ENCODE measurements at regions of chr11 and their contacts with region 1.

Region 1: DNA sequence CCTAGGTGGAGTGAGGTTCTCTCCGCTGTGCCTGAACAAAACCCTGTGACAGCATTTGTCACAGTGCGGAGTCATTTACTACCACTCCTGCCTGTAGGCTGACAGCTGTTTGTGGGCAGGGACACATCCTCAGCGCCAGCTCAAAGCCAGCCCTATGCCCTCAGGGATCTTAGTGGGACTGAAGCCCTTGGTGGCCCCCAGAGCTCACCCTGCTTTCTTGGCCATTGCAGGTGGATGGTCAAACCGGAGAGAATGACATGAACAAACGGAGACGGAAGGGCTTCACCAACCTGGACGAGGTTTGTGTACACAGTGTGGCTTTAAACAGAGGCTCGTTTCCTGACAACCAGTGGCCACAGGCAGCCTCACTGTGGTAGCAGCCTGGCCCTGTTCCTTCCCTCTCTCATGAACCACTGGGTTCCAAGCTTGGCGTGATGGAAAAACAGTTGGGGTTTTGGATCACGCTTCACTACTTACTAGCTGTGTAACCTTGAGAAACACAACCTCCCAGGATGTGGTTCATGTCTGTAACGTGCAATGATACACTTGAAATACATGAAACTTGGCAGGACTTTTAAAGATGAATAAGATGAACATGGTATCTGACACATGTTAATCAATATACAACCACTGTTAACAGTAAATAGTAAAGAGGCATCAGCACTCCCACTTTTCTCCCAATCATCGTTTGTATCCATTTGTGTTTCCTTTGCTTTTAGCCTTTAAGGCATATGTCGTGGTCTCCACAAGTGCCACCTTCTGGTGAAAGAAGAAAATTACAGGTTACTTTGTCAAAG is 125.8 kb downstream of the MICAL2 start:
- DNase-seq: peak; percentile 58
- ATAC-seq: peak; percentile 78
- H3K4me3 ChIP-seq: no peak overlapping the region
- H3K27ac ChIP-seq: no peak overlapping the region
- H3K4me1 ChIP-seq: peaks cover 26% of the 10 kb centered on the region
- H3K27me3 ChIP-seq: no peaks in the 10 kb centered on the region
- CTCF ChIP-seq: peak; percentile 69
- EP300 ChIP-seq: no peak
- POLR2A ChIP-seq: no peak
- RAD21 ChIP-seq: peak; percentile 58

Region 2: DNA sequence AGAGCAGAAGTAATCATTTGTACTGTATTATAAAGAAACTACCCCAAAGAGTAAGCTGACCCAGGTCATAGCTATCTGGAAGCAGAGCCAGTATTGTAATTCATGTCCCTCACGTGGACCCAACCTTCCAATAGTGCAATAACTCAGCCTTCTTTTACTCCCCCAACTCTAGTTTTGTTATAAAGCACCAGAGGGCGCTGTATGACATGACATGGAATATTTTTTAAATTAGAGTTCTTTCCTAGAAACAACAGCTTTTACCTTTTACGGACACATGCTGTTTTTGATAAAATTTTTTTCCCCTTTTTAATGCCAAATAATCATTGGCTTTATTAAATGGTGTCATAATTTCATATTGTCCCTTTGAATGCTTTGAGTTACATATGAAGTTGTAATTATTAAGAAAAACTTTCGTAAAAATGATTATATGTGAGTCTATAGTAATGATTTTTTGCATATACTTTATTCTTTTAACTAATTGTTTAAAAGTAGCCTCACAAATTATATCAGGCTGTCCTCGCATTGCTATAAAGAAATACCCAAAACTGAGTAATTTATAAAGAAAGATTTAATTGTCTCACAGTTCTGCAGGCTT is 304.6 kb before region 1 on chr11:
- CTCF ChIA-PET with region 1: no interaction called
- POLR2A ChIA-PET with region 1: no interaction called
- in situ Hi-C with region 1: no loop called
- intact Hi-C with region 1: loop called (anchors 10 kb)
- DNase-seq: peak; percentile 62
- ATAC-seq: peak; percentile 88
- H3K4me3 ChIP-seq: no peak overlapping the region
- H3K27ac ChIP-seq: no peak overlapping the region
- H3K4me1 ChIP-seq: no peaks in the 10 kb centered on the region
- H3K27me3 ChIP-seq: no peaks in the 10 kb centered on the region
- CTCF ChIP-seq: peak; percentile 62
- EP300 ChIP-seq: no peak
- POLR2A ChIP-seq: no peak
- RAD21 ChIP-seq: 0 out of 2 replicates have a peak, but pooled peaks have one; percentile 20

Region 3: GRCh38 chr11:12052676-12053605 is 183.2 kb before region 1 on chr11:
- CTCF ChIA-PET with region 1: interaction called, 57 read pairs
- POLR2A ChIA-PET with region 1: no interaction called
- in situ Hi-C with region 1: loop called (anchors 5 kb)
- intact Hi-C with region 1: no loop called
- DNase-seq: no peak
- ATAC-seq: peak; percentile 42; the same call in 2 of the 3 replicates
- H3K4me3 ChIP-seq: no peak overlapping the region
- H3K27ac ChIP-seq: no peak overlapping the region
- H3K4me1 ChIP-seq: peaks cover 36% of the 10 kb centered on the region
- H3K27me3 ChIP-seq: no peaks in the 10 kb centered on the region
- CTCF ChIP-seq: peak; percentile 54
- EP300 ChIP-seq: no peak
- POLR2A ChIP-seq: no peak
- RAD21 ChIP-seq: no peak

Region 4: GRCh38 chr11:12110201-12110713 is 125.9 kb before region 1 on chr11 and contains the start of gene MICAL2:
- CTCF ChIA-PET with region 1: interaction called, 3 read pairs
- POLR2A ChIA-PET with region 1: no interaction called
- in situ Hi-C with region 1: loop called (anchors 10 kb)
- intact Hi-C with region 1: no loop called
- DNase-seq: peak; percentile 64
- ATAC-seq: peak; percentile 98
- H3K4me3 ChIP-seq: peak within 1 kb of the TSS; percentile 43 to 59 (median 55)
- H3K27ac ChIP-seq: no peak within 1 kb of the TSS
- H3K4me1 ChIP-seq: peaks cover 33% of the 10 kb centered on the region
- H3K27me3 ChIP-seq: peaks cover 0 to 3% of the 10 kb centered on the region in 2 experiments; a peak in 2 of 5 replicates
- CTCF ChIP-seq: 0 out of 2 replicates have a peak, but pooled peaks have one; percentile 14
- EP300 ChIP-seq: no peak
- POLR2A ChIP-seq: no peak
- RAD21 ChIP-seq: no peak
- total RNA-seq, gene MICAL2: 1.1 and 1.4 TPM in 2 replicates

Region 5: DNA sequence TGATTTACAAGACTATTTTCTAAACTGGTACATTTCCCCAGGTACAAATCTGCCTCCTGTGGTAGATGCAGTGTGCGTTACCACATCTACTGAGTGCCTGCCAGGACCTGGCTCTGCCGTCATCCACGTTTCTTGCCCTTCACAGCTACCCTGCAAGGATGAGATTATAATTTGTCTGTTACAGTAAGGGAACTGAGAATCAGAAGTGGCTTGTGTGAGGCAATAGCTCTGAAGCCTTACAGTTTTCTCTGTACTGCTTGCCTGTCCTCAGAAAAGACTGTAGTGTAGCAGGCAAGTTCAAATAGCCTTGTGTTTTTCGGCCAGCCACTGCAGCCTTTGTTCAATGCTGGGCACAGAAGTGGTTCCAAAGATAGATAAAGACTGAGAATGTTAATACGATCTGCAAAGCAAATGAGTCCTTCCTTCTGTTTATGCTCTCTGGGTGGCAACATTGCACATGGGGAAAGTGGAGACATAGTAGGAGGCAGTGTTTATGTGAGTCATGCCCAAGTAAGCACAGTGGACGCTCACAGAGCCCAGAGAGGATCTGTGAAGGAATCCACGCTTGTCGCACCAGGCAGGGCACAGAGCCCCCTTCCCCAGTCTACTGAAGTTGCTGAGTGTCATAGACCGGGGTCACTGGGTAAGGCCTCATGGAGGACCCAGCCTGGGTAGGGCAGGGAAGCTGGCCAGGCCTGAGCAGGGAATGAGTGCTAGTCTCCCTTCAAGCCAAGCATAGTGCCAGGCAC is 76.6 kb before region 1 on chr11:
- CTCF ChIA-PET with region 1: no interaction called
- POLR2A ChIA-PET with region 1: no interaction called
- in situ Hi-C with region 1: no loop called
- intact Hi-C with region 1: loop called (anchors 10 kb)
- DNase-seq: no peak
- ATAC-seq: no peak
- H3K4me3 ChIP-seq: no peak overlapping the region
- H3K27ac ChIP-seq: no peak overlapping the region
- H3K4me1 ChIP-seq: peaks cover 15% of the 10 kb centered on the region
- H3K27me3 ChIP-seq: no peaks in the 10 kb centered on the region
- CTCF ChIP-seq: no peak
- EP300 ChIP-seq: no peak
- POLR2A ChIP-seq: no peak
- RAD21 ChIP-seq: no peak

Region 6: DNA sequence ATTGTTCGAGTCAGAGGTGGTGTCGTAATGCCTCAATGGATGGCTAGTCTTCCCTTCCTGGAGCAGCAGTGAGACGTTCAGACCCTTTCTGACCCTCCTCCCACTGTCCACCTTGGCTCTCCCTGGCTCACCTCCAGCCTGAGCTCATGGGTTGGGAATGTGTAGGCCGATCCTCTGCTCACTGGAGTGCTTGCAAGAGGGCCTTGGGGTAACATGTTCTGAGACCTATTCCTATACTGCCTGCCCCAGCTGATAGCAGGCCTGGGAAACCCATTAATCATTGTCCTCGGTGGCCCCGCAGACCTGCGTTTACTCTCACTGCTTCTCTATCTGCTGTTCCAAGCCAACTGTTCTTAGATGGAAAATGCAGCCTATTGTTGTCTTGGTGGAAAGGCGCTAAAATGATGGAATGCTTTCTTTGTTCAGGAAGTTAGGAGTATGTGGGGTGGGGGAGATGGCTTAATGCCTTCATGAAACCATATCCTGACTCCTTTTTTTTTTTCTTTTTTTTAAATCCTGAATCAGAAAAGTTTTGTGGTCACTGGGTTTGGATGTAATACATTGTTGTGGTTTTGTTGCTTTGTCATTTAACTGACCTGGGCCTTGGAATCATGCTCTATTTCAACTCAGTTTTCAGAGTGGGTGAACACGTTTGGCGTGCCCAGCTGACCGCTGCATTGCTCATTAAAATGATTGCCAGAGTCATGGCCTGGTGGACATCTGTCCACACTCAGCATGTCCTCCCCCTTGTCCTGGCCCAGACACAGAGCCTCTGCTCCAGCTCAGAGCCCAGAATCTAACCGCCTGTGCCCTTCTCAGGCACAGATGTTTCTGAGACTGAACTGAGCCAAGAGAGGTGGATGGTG is 53.2 kb before region 1 on chr11:
- CTCF ChIA-PET with region 1: no interaction called
- POLR2A ChIA-PET with region 1: no interaction called
- in situ Hi-C with region 1: no loop called
- intact Hi-C with region 1: no loop called
- DNase-seq: peak; percentile 58
- ATAC-seq: peak; percentile 73
- H3K4me3 ChIP-seq: no peak overlapping the region
- H3K27ac ChIP-seq: no peak overlapping the region
- H3K4me1 ChIP-seq: 0 out of 2 replicates have a peak, but pooled peaks cover 7% of the 10 kb centered on the region
- H3K27me3 ChIP-seq: no peaks in the 10 kb centered on the region
- CTCF ChIP-seq: no peak
- EP300 ChIP-seq: no peak
- POLR2A ChIP-seq: no peak
- RAD21 ChIP-seq: no peak

Region 7: DNA sequence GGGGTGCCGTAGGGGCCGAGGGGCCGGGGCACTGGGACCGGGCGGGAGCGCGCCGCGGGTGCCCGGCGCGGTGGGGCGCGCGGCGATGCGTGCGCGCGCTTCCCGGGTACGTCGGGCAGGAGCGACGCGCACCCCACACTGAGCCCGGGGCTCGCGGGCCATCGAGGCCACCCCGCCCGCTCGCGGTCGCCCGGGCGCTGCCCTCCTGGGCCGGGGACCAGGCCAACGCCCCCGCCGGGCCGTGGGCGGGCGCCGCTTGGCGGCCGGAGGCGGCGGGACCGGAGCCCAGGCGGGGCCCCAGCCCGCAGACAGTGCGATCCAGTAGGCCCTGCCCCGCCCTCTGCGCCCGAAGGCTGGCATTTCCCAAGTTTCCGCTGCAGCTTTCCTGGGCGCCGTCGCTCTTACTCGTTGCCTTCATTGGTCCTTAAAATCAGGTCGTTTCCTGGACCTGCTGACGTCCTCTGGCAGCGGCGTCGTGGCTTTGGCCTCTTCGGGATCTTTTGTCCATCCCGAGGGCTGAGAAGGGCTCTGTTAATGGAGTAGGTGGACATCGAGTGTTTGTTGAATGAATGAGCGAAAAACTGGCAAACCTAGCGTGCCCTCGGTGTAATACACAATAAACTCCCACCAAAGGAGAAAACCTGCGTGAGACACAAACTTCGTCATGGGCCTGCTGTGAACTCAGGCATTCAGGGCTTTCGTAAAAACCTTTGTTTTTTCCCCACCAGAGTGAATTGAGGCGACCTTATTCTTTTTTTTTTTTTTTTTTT is 141.9 kb after region 1 on chr11:
- CTCF ChIA-PET with region 1: no interaction called
- POLR2A ChIA-PET with region 1: no interaction called
- in situ Hi-C with region 1: no loop called
- intact Hi-C with region 1: no loop called
- DNase-seq: peak; percentile 62
- ATAC-seq: peak; percentile 91
- H3K4me3 ChIP-seq: peak overlapping the region; percentile 80 to 91 (median 86)
- H3K27ac ChIP-seq: peak overlapping the region; percentile 63
- H3K4me1 ChIP-seq: peaks cover 27% of the 10 kb centered on the region
- H3K27me3 ChIP-seq: peaks cover 0 to 4% of the 10 kb centered on the region in 2 experiments; a peak in 1 of 5 replicates
- CTCF ChIP-seq: peak; percentile 32
- EP300 ChIP-seq: no peak
- POLR2A ChIP-seq: peak; percentile 30 to 35; a peak in 1 of 4 replicates
- RAD21 ChIP-seq: peak; percentile 59; the same call in 1 of the 2 replicates

Measured in HepG2 (cell line).